Naive thymus-derived CD8-positive, alpha-beta T cell (primary cell): ENCODE measurements at regions of chr7 and their contacts with region 1.

Region 1: GRCh38 chr7:1532483-1533424 is 2.3 kb downstream of the MAFK start:
- DNase-seq: peak in 9 of 10 donors; percentile 37 to 72 (median 55)
- ATAC-seq: peak; percentile 51 to 59
- H3K4me3 Mint-ChIP-seq: peak overlapping the region; percentile 86 to 94 (median 91)
- H3K27ac Mint-ChIP-seq: peak overlapping the region; percentile 91 to 98 (median 97)
- H3K4me1 Mint-ChIP-seq: peaks cover 17 to 42% (median 34%) of the 10 kb centered on the region in 4 donors
- H3K27me3 Mint-ChIP-seq: no peaks in the 10 kb centered on the region

Region 2: GRCh38 chr7:1503816-1504775 is 28.7 kb before region 1 on chr7 and contains the start of gene INTS1:
- POLR2A ChIA-PET with region 1: interaction called, 29 read pairs
- DNase-seq: peak; percentile 77 to 93 (median 88)
- ATAC-seq: peak; percentile 90 to 91
- H3K4me3 Mint-ChIP-seq: peak within 1 kb of the TSS; percentile 80 to 91 (median 87)
- H3K27ac Mint-ChIP-seq: peak within 1 kb of the TSS; percentile 53 to 91 (median 80)
- H3K4me1 Mint-ChIP-seq: peaks cover 26 to 68% (median 51%) of the 10 kb centered on the region in 4 donors
- H3K27me3 Mint-ChIP-seq: no peaks in the 10 kb centered on the region
- polyA plus RNA-seq, gene INTS1: 9.1 to 24.6 (median 18.5) TPM

Region 3: DNA sequence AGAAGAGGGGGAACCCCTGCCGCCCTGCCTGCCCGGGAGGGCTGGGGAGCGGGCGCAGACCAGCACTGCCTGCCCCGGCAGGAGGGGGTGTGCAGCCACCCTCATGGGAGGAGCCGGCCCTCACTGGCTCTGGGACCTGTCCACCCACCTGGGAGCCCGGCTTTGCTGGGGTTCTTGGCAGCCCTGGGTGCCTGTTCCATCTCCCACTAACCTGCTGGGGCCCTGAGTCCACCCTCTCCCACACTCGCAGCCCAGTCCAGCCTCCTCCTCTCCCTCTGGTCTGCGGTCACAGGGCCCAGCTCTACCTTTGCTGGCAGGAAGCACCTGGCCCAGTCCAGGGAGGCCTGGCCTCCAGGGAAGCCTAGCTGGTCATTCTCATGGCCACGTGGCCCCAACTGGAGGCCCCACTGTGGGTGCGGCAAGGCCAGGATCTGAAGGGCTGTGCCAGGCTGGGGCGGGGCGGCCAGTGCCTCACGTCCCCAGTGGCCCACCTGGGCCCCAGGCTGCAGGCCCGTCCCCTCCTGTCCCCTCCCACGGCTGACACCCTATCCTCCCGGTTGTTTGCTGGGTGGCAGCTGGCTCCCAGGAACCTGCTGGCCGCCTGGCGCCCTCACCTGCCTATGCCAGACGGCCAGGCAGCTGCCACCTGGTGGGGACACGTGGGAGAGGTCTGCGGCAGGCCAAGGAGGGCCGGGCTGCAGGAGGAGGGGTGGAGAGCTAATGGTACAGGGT is 23.2 kb after region 1 on chr7 and contains the start of gene TMEM184A:
- POLR2A ChIA-PET with region 1: interaction called, 13 read pairs
- DNase-seq: peak in 9 of 10 donors; percentile 33 to 77 (median 47)
- ATAC-seq: peak; percentile 89 to 94
- H3K4me3 Mint-ChIP-seq: no peak within 1 kb of the TSS
- H3K27ac Mint-ChIP-seq: peak within 1 kb of the TSS in 1 of 10 donors; percentile 24
- H3K4me1 Mint-ChIP-seq: peaks cover 0 to 9% (median 4%) of the 10 kb centered on the region in 4 donors
- H3K27me3 Mint-ChIP-seq: no peaks in the 10 kb centered on the region
- polyA plus RNA-seq, gene TMEM184A: 0.04 TPM in 1 of 3 donors, not detected in the others